ENCODE measurements at regions of chr7 and their contacts with region 1.

Region 1: DNA sequence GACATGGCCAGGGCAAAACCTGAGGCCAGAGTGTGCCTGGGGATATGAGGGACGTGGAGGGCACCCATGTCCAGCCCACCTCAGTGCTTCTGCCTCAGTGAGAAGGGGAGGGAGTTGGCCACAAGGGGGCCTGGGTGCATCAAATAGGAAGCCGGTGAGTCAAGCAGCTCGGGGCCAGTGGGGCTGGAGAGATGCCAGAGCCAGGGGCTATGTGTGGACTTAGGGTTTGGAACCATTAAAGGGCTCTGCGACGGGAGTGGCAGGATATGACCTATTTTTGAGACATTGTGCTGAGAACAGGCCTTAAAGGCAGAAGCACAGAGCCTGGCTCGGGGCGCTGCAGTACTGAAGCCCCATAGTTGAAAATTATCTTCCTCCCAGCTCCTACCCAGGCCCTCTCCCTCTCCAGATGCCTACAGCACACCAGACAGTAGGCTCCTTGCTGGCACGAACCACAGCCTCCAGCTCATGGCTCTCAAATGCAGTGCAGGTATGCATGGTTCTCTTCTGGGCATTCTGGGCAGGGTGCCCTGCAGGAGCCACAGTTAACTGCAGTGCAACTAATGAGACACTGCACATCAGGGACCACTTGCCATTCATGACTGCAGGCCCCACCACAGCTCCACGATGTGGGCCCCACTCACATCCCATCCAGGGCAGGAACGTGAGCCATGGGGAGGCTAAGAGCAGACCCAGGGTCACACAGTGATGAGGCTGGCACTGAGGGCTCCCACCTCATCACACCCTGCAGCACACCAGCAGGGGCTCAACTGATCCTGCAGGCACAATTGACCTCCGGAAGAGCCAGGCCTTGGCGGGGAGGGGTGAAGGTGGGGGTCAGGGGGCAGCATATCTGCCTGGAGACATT is 7.2 kb upstream of the PGAM2 start:
- DNase-seq: peak; percentile 92
- H3K4me3 ChIP-seq: no peak overlapping the region
- H3K27ac ChIP-seq: peak overlapping the region; percentile 69
- H3K4me1 ChIP-seq: peaks cover 36% of the 10 kb centered on the region
- H3K27me3 ChIP-seq: no peaks in the 10 kb centered on the region

Region 2: DNA sequence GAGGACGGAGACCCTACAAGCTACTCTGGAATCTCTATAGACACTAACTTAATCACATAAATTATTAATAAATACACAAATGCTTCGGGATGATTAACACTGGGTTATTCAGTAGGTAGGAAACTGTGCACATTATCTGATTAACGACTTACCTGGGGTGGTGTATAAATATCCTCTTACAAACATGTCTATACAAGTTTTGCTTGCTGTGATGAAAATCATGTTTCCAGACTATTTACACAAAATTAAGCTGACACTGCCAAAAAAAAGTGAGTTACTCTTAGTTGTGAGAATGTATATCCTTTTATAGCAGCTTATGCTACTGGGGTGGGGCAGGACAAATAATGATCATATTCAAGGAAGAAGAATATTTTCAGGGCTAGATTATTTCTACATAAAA is 1475.3 kb before region 1 on chr7:
- in situ Hi-C with region 1: no loop called
- DNase-seq: no peak
- H3K4me3 ChIP-seq: no peak overlapping the region
- H3K27ac ChIP-seq: no peak overlapping the region
- H3K4me1 ChIP-seq: no peaks in the 10 kb centered on the region
- H3K27me3 ChIP-seq: no peaks in the 10 kb centered on the region

Region 3: DNA sequence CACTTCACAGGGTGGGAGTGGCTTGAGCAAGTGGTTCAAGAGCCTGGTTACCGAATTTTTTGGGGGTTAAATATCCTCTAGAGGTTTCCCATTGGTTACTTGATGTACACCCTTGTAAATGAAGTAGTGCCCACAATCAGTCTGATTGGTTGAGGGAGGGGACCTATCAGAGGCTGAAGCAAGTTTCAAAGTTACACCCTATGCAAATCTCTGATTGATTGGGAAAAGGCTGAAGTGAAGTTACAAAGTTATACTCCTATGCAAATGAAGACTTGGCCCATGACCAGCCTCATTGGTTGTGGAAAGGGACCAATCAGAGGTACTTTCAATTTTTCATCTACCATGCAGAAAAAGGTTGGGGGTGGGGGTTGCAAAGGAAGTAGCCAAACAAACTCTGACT is 111.7 kb before region 1 on chr7:
- in situ Hi-C with region 1: no loop called
- DNase-seq: no peak
- H3K4me3 ChIP-seq: no peak overlapping the region
- H3K27ac ChIP-seq: no peak overlapping the region
- H3K4me1 ChIP-seq: no peaks in the 10 kb centered on the region
- H3K27me3 ChIP-seq: no peaks in the 10 kb centered on the region

Region 4: DNA sequence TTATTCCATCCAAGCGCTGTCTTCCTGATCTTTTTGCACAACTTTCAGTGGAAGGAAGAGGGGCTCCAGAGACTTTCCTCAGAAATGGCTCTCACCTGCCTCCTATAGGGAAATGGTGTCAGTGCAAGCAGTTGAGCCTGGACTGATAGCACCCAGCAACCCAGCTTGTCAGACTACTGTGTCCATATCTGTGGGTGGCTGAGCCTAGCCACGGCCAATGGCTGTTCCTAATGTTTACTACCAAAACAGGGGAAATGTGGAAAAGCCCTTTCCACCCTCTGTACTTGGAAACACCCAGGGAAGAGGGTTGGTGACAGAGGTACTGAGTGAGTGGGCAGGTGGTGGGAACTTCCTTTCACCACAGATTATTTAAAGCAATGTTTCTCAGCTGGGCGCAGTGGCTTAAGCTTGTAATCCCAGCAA is 123.9 kb after region 1 on chr7:
- in situ Hi-C with region 1: loop called (anchors 10 kb)
- DNase-seq: peak; percentile 78
- H3K4me3 ChIP-seq: no peak overlapping the region
- H3K27ac ChIP-seq: no peak overlapping the region
- H3K4me1 ChIP-seq: no peaks in the 10 kb centered on the region
- H3K27me3 ChIP-seq: no peaks in the 10 kb centered on the region

Region 5: GRCh38 chr7:44398511-44398911 is 325.9 kb after region 1 on chr7:
- in situ Hi-C with region 1: no loop called
- DNase-seq: no peak
- H3K4me3 ChIP-seq: no peak overlapping the region
- H3K27ac ChIP-seq: no peak overlapping the region
- H3K4me1 ChIP-seq: no peaks in the 10 kb centered on the region
- H3K27me3 ChIP-seq: no peaks in the 10 kb centered on the region

Measured in GM23248 (cell line).